OCI-LY7 (cell line): ENCODE measurements at regions of chr12 and their contacts with region 1.

Region 1: GRCh38 chr12:108562348-108563135 is at the start of gene ISCU:
- DNase-seq: peak; percentile 99
- H3K4me3 ChIP-seq: peak within 1 kb of the TSS; percentile 79
- H3K27ac ChIP-seq: peak within 1 kb of the TSS; percentile 82
- H3K4me1 ChIP-seq: peaks cover 59% of the 10 kb centered on the region
- CTCF ChIP-seq: no peak
- total RNA-seq, gene ISCU: 137 and 146 TPM in 2 replicates

Region 2: GRCh38 chr12:108514973-108515814 is 47.3 kb before region 1 on chr12 and contains the start of gene FICD:
- CTCF ChIA-PET with region 1: no interaction called
- POLR2A ChIA-PET with region 1: interaction called, 8 read pairs
- intact Hi-C with region 1: loop called (anchors 2 kb)
- DNase-seq: peak; percentile 99
- H3K4me3 ChIP-seq: peak within 1 kb of the TSS; percentile 84
- H3K27ac ChIP-seq: no peak within 1 kb of the TSS
- H3K4me1 ChIP-seq: peaks cover 20% of the 10 kb centered on the region
- CTCF ChIP-seq: no peak
- total RNA-seq, gene FICD: 8.4 and 13.1 TPM in 2 replicates

Region 3: DNA sequence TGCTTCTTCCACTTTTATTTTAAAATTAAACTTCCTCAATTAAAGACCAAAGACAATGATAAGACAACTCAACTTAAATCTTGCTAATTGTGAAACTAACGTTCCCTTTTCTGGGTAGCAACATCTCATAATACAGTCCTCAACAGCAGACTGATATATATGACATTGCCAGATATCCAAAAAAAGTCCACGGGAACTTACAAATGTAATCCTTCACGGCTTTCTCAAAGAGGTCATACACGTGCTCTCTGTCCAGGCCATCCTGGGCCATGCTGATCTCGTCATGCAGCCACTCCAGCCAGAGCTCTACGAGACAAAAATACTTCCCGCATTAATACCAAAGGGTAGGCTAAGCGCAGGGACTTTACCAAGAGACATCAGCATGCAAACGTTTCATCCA is 14.9 kb before region 1 on chr12:
- CTCF ChIA-PET with region 1: no interaction called
- POLR2A ChIA-PET with region 1: interaction called, 17 read pairs
- intact Hi-C with region 1: no loop called
- DNase-seq: no peak
- H3K4me3 ChIP-seq: no peak overlapping the region
- H3K27ac ChIP-seq: no peak overlapping the region
- H3K4me1 ChIP-seq: peaks cover 49% of the 10 kb centered on the region
- CTCF ChIP-seq: no peak

Region 4: DNA sequence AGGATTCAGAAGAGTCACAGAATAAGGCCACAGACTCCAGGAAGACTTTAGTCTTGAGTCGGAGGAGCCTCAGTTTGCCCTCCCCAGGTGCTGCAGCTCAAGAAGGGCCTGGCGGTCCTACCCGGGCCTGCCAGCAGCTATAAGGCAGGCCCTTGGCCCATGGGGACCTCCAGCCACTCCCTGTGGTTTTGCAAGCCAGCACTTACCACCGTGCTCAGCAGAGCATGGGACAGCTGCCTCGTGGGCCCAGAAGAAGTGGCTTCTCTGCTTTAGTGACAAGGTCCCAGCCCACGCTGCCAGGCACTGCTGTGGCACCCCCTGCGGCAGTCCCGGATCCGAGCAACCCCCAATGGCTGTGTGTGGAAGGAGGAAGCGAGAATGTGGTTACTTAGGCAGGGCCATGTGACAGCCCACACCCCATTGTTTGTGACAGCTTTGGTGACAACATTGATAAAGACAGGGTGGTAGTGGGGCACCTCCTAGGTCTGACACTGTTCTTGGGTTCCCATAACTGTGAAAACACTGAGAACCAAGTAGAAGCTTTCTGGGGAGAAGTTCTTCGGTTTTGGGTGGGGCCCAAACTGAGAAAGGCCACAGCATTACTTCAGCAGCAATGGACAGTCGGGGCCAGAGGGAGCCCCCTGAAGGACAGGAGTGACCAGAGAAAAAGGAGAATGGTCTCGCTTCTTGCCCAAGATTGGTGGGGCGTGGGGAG is 71.1 kb after region 1 on chr12 and contains the start of gene SELPLG:
- CTCF ChIA-PET with region 1: interaction called, 3 read pairs
- POLR2A ChIA-PET with region 1: interaction called, 309 read pairs
- intact Hi-C with region 1: loop called (anchors 1 kb)
- DNase-seq: peak; percentile 97
- H3K4me3 ChIP-seq: peak within 1 kb of the TSS; percentile 75
- H3K27ac ChIP-seq: peak within 1 kb of the TSS; percentile 99
- H3K4me1 ChIP-seq: peaks cover 88% of the 10 kb centered on the region
- CTCF ChIP-seq: peak; percentile 62; the same call in 1 of the 2 replicates
- total RNA-seq, gene SELPLG: 16.9 and 20.0 TPM in 2 replicates

Region 5: DNA sequence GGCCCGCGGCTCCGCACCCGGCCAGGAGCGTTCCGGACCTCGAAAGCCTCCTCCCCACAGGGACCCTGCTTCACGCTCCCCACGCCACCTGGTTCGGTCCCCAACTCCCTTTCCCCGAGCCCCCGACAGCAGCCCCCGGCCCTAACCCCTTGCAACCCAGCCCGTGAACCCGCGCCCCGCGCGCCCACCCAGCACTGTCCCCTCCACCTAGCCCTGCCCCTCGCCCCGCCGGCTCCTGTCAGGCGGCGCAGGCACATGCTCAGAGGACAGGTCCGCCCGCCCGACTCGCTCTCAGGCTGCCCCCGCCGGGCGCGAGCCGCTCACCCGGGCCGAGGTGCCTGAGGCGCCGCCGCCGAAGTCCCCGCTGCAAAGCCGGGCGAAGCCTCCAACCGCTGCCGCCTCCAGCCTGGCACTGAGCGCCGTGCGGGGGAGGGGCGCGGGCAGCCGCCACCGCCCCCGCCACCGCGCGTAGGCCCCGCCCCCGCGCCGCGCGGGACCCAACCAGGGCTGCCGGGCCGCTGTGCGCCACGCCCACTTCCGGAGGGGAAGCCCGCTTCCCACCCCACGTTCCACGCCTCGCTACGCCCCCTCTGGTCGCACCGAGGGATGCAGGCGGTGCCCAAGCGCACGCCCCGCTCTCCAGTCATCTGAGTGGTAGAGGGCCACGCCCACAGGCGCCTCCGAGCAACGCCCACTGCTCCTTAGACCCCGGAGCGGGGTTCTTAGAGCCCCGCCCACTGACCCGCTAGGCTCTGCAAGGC is 168.7 kb after region 1 on chr12 and contains the start of gene CORO1C:
- CTCF ChIA-PET with region 1: no interaction called
- POLR2A ChIA-PET with region 1: interaction called, 3 read pairs
- intact Hi-C with region 1: loop called (anchors 2 kb)
- DNase-seq: peak; percentile 96
- H3K4me3 ChIP-seq: peak within 1 kb of the TSS; percentile 90
- H3K27ac ChIP-seq: peak within 1 kb of the TSS; percentile 74
- H3K4me1 ChIP-seq: peaks cover 41% of the 10 kb centered on the region
- CTCF ChIP-seq: peak; percentile 85
- total RNA-seq, gene CORO1C: 74.7 and 76.3 TPM in 2 replicates

Region 6: GRCh38 chr12:108856428-108857157 is 294.1 kb after region 1 on chr12:
- CTCF ChIA-PET with region 1: no interaction called
- POLR2A ChIA-PET with region 1: no interaction called
- intact Hi-C with region 1: loop called (anchors 5 kb)
- DNase-seq: peak; percentile 26
- H3K4me3 ChIP-seq: peak overlapping the region; percentile 68
- H3K27ac ChIP-seq: no peak overlapping the region
- H3K4me1 ChIP-seq: peaks cover 38% of the 10 kb centered on the region
- CTCF ChIP-seq: no peak

Region 7: DNA sequence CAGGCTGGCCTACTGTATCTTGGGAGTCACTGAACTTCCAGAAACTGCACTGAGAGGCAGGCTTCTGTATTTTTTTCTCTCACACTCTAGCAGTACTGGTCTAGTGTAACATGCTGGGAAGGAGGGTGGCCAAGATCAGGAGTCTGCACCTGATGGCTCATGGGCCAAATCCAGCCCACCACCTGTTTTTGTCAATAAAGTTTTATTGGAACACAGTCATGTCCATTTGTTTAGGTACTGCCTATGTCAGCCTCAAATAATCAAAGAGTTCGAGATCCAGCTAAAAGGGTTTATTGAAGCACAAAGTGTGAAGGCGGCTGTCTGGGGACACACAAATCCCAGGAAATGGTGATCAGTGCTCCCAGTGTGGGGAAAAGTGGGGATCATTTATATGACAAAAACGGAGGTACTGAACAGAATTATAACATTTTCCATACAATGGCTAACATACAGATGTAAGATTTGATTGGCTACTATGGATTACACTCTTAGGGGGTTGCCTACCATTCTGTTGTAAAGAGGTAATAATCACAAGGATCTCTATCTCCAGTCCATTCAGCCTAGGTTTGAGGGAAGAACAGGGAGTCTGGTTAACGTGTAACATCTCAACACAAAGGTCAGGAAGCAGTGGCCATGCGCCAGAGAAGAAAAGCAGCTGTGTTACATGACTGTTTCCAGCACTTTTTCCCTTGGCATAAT is 502.8 kb after region 1 on chr12:
- CTCF ChIA-PET with region 1: no interaction called
- POLR2A ChIA-PET with region 1: no interaction called
- intact Hi-C with region 1: loop called (anchors 5 kb)
- DNase-seq: no peak
- H3K4me3 ChIP-seq: no peak overlapping the region
- H3K27ac ChIP-seq: peak overlapping the region; percentile 94
- H3K4me1 ChIP-seq: peaks cover 63% of the 10 kb centered on the region
- CTCF ChIP-seq: no peak